Heart right ventricle (tissue), 16 donors: ENCODE measurements at regions of chr11 and their contacts with region 1.

Region 1: GRCh38 chr11:61792310-61793085 is at the starts of genes FEN1 and TMEM258:
- DNase-seq: peak; percentile 87 to 89
- ATAC-seq: peak; percentile 91 to 97 (median 94)
- H3K4me3 ChIP-seq: peak within 1 kb of the TSS; percentile 65 to 90 (median 78)
- H3K27ac ChIP-seq: peak within 1 kb of the TSS; percentile 89 to 98 (median 96)
- H3K4me1 ChIP-seq: peaks cover 4 to 34% (median 21%) of the 10 kb centered on the region in 9 donors
- H3K27me3 ChIP-seq: no peaks in the 10 kb centered on the region
- CTCF ChIP-seq: peak in 1 of 9 donors; percentile 14
- total RNA-seq, gene FEN1: 3.7 to 8.6 (median 6.2) TPM
- total RNA-seq, gene TMEM258: 98.9 to 142 (median 109) TPM

Region 2: DNA sequence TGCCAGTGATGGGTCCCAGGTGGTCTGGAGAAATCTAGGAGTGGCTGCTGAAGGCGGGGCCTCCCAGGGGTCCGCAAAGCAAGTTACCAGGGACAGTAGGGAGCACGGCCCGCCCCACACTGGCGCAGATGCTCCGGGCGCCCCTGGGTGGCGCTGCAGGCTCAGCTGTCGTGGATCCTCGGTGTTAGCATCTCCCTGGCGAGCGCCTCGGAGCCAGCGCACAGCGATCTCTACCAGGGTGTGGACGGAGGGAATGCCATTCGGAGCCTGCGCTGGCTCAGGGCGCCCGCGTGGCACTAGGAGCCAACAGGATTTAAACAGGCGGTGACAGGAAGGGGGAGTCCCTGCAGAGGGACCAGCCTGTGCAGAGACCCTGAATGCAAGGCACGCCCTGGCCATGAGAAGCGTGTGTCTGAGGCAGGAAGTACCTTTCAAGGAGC is 78.7 kb after region 1 on chr11:
- intact Hi-C with region 1: loop called in 2 of 10 experiments (anchors 5 kb)
- DNase-seq: peak; percentile 79 to 87
- ATAC-seq: peak; percentile 82 to 91 (median 88)
- H3K4me3 ChIP-seq: peak overlapping the region in 4 of 10 donors; percentile 10 to 40 (median 25)
- H3K27ac ChIP-seq: peak overlapping the region in 9 of 10 donors; percentile 5 to 72 (median 53)
- H3K4me1 ChIP-seq: peaks cover 6 to 51% (median 31%) of the 10 kb centered on the region in 9 donors
- H3K27me3 ChIP-seq: no peaks in the 10 kb centered on the region
- CTCF ChIP-seq: peak; percentile 92 to 98 (median 94)

Region 3: GRCh38 chr11:61899146-61899841 is 106.8 kb after region 1 on chr11:
- intact Hi-C with region 1: loop called in 6 of 10 experiments (anchors 5 kb)
- DNase-seq: peak; percentile 84 to 88
- ATAC-seq: peak; percentile 67 to 87 (median 82)
- H3K4me3 ChIP-seq: no peak overlapping the region
- H3K27ac ChIP-seq: peak overlapping the region in 6 of 10 donors; percentile 2 to 61 (median 42)
- H3K4me1 ChIP-seq: peaks cover 0 to 22% (median 10%) of the 10 kb centered on the region in 9 donors
- H3K27me3 ChIP-seq: no peaks in the 10 kb centered on the region
- CTCF ChIP-seq: peak; percentile 98 to 100 (median 100)

Region 4: DNA sequence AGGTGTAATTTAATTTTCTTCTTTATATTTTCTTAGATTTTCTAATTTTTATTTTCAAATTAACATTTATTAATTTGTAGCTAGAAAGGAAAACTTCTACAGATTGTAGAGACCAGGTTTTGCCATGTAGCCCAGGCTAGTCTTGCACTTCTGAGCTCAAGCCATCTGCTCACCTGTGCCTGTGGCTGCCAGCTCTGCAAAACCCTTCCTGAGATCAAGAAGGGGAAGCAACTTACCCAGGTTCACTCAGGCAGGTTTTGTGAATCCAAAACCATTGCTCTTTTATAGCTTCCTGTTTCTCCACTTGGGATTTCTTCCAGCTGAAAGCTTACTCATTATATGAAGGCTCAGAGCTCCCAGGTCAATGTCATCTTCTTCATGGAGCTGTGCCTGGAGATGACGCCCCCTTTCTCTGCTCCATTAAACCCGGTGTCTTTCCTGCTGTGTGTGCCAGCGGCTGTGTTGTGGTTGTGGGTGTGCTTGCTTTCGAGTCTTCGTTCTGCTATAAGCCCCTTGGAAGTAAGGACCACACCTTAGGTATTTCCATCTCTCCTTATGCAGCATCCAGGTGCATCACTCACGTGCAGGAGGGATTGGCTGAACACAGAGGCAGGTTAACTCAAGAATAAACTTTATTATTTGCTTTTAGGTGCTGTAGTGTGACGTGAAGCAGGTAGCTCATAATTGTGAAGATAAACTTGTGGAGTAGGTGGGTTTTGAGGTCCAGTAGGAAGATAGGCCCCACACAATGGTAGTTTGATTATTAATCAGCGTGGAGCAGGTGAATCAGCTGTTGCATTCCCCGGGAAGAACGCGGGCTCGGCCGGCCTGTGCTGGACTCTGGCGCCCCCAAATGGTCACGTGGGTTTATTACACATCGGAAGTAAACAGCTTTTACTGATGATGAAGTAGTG is 289.1 kb after region 1 on chr11:
- intact Hi-C with region 1: loop called in 6 of 10 experiments (anchors 1 to 10 kb)
- DNase-seq: peak; percentile 74 to 79
- ATAC-seq: peak; percentile 59 to 92 (median 86)
- H3K4me3 ChIP-seq: no peak overlapping the region
- H3K27ac ChIP-seq: peak overlapping the region in 1 of 10 donors; percentile 16
- H3K4me1 ChIP-seq: peaks cover 0 to 15% (median 0%) of the 10 kb centered on the region in 9 donors
- H3K27me3 ChIP-seq: no peaks in the 10 kb centered on the region
- CTCF ChIP-seq: peak; percentile 86 to 98 (median 94)

Region 5: GRCh38 chr11:62315431-62315830 is 522.9 kb after region 1 on chr11:
- intact Hi-C with region 1: loop called in 1 of 10 experiments (anchors 10 kb)
- DNase-seq: no peak
- ATAC-seq: no peak
- H3K4me3 ChIP-seq: no peak overlapping the region
- H3K27ac ChIP-seq: no peak overlapping the region
- H3K4me1 ChIP-seq: peaks cover 0 to 11% (median 0%) of the 10 kb centered on the region in 9 donors
- H3K27me3 ChIP-seq: peaks cover 0 to 31% (median 8%) of the 10 kb centered on the region in 7 donors
- CTCF ChIP-seq: no peak